Activated T-helper 1 cell treated with anti-CD3 and anti-CD28 coated beads, Interleukin-12 subunit alpha, Interleukin-12 subunit beta, Interleukin-2, Interleukin-4 antibody, amounts not matched to agents 30 ng/mL and 10 ng/mL and 1 ng/mL, durations not matched to agents 14 hours and 24 hours and 36 hours (primary cell): ENCODE measurements at regions of chr10 and their contacts with region 1.

Region 1: GRCh38 chr10:43361986-43362839 is 9.2 kb upstream of the FXYD4 start:
- DNase-seq: peak; percentile 98
- H3K4me3 Mint-ChIP-seq: peak overlapping the region; percentile 98
- H3K27ac Mint-ChIP-seq: peak overlapping the region; percentile 99
- H3K4me1 Mint-ChIP-seq: peaks cover 25% of the 10 kb centered on the region
- H3K27me3 Mint-ChIP-seq: peaks cover 1% of the 10 kb centered on the region

Region 2: DNA sequence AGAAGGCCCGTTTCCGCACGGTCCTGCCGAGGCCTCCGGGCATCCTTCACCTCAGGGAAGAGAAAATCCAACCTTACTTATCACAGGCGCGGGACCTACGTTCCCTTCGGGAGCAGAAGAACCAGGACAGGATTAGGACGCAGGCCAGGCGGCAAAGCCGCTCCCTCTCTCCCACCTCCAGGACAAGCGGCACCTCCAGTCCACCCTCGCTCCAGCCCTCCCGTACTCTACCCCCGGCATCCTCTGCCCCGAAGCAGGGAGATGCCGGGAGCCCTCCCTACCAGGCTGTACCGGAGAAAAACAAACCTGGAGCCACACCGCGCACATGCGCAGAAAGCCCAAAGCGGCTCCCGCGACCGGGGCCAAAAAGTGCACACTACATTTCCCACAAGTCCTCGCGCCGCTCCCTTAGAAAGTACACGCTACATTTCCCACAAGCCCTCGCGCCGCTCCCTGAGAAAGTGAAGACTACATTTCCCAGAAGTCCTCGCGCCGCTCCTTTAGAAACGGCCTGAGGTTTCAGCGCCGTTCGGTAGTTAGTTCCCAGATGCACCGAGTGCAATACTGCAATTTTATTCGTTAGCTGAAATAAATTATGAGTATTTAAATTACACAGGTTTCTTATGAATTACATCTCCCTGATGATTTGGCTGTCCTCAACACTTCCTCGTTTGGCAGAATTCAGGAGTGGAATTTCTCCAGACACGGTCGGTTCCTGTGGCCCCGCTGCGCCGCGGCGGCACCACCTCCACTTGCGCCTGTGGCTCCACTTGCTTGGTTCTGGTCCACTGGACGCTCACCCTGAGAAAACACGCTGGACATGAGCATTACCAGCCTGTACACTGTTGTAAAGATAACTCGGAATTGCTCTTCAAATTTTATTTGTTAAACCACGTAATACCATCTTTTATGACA is 809.5 kb before region 1 on chr10:
- intact Hi-C with region 1: loop called (anchors 5 kb)
- DNase-seq: peak; percentile 94
- H3K4me3 Mint-ChIP-seq: peak overlapping the region; percentile 99
- H3K27ac Mint-ChIP-seq: peak overlapping the region; percentile 98
- H3K4me1 Mint-ChIP-seq: peaks cover 38% of the 10 kb centered on the region
- H3K27me3 Mint-ChIP-seq: no peaks in the 10 kb centered on the region

Region 3: DNA sequence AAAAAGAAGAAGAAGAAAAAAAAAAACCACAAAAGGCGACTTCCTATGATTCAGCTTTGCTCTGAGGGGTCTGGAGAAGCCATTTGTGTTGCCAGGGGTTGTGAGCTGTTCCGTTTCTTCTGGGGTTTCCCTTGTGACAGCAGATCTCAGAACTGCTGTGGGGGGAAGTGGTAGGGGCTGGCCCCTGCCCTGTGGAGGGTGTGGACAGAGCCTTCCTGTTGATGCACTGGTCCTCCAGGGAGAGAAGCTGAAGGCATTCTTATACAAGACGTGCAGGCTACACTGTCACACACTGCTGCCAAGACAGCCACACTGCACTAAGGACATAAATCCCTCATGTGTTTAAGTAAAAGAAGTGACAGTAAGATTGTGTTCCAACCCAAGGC is 241.3 kb before region 1 on chr10:
- intact Hi-C with region 1: loop called (anchors 5 kb)
- DNase-seq: peak; percentile 82
- H3K4me3 Mint-ChIP-seq: peak overlapping the region; percentile 54
- H3K27ac Mint-ChIP-seq: peak overlapping the region; percentile 90
- H3K4me1 Mint-ChIP-seq: peaks cover 65% of the 10 kb centered on the region
- H3K27me3 Mint-ChIP-seq: no peaks in the 10 kb centered on the region

Region 4: GRCh38 chr10:43322769-43323168 is 39.4 kb before region 1 on chr10:
- intact Hi-C with region 1: loop called (anchors 1 kb)
- DNase-seq: peak; percentile 85
- H3K4me3 Mint-ChIP-seq: no peak overlapping the region
- H3K27ac Mint-ChIP-seq: no peak overlapping the region
- H3K4me1 Mint-ChIP-seq: peaks cover 39% of the 10 kb centered on the region
- H3K27me3 Mint-ChIP-seq: peaks cover 15% of the 10 kb centered on the region

Region 5: GRCh38 chr10:43396928-43397624 is 34.9 kb after region 1 on chr10:
- intact Hi-C with region 1: loop called (anchors 1 kb)
- DNase-seq: peak; percentile 81
- H3K4me3 Mint-ChIP-seq: peak overlapping the region; percentile 90
- H3K27ac Mint-ChIP-seq: peak overlapping the region; percentile 94
- H3K4me1 Mint-ChIP-seq: peaks cover 83% of the 10 kb centered on the region
- H3K27me3 Mint-ChIP-seq: no peaks in the 10 kb centered on the region

Region 6: GRCh38 chr10:43420369-43421200 is 58.4 kb after region 1 on chr10:
- intact Hi-C with region 1: loop called (anchors 1 kb)
- DNase-seq: peak; percentile 78
- H3K4me3 Mint-ChIP-seq: peak overlapping the region; percentile 85
- H3K27ac Mint-ChIP-seq: peak overlapping the region; percentile 99
- H3K4me1 Mint-ChIP-seq: peaks cover 45% of the 10 kb centered on the region
- H3K27me3 Mint-ChIP-seq: no peaks in the 10 kb centered on the region

Region 7: DNA sequence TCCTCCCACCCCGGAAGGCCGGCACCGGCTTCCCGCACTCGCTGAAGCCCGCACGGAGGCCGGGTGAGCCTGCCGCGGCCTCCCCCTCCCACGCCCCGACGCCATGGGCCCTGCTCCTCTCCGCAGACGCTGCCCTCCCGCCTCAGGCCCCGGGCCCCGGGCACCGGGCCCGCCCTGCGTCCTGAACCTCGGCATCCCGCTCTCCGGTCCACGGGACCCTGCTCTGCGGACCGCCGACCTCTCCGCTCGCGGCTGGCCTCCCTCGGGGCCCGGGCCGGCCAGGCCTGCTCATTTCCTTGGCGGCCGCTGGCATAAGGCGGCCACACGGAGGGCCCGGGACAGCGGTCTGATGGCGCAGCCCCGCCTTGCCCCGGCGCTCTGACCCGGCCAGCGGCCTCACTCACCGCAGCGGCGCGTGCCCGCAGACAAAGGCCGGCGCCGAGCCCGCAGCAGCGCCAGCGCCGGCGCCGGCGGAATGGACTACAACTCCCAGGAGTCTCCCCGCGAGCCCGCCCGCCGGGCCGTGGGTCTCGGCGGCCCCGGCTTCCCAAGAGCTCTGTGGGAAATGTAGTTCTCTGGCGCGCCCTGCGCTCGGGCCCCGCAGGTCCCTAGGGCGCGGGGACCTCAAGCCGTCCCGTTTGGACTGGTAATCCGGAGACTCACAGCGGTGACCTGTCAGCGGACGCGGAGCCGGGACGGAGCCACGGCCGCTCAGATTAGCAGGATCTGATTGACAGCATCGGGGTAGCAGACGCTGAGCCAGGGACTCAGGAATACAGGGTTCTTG is 286.4 kb after region 1 on chr10 and contains the start of gene ZNF32:
- intact Hi-C with region 1: loop called (anchors 1 kb)
- DNase-seq: peak; percentile 78
- H3K4me3 Mint-ChIP-seq: peak within 1 kb of the TSS; percentile 89
- H3K27ac Mint-ChIP-seq: peak within 1 kb of the TSS; percentile 90
- H3K4me1 Mint-ChIP-seq: peaks cover 11% of the 10 kb centered on the region
- H3K27me3 Mint-ChIP-seq: peaks cover 11% of the 10 kb centered on the region
- total RNA-seq, gene ZNF32: 13.2 and 13.7 TPM in 2 replicates